ENCODE measurements at regions of chr3 and their contacts with region 1.

Region 1: DNA sequence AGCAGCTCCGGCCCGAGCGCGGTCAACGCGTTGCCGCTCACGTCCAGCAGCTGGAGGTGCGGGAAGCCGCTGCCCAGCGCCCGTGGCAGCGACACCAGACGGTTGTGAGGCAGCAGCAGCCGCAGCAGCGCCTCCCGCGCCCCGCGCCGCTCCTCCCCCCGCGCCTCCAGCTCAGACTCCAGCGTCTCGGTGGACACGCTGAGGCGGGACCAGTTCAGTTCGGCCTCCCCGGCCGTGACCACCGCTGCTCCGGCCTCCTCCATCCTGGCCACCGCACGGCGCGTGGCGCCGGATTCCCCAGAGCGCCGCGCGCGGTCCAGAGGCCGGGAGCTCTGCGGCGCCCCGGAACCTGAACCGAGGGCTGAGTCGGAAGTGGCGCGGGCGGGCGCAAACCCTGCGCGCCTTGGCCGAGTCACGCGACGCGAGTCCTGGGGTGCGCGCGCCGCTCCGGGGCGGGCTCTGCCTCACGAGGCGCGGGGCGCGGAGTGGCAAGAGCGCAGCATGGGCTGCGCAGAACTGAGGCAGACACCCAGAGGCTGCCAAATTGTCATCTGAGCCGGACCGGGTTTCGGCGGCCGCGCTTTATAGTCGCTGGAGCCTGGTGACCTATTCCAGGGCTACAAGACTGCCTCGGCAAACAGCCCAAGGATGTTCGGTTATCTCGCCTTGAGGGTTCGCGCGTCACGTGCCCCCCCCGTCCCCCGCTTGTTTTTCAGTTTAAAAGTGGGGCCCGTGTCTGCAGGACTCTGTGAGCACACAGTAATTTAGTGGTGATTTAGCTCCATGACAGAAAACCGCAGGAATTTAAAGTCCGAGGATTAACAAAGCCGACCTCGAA is at the start of gene LRRC58:
- DNase-seq: peak; percentile 94 to 98 (median 97)
- ATAC-seq: peak; percentile 99
- H3K4me3 ChIP-seq: peak within 1 kb of the TSS; percentile 79
- H3K27ac ChIP-seq: peak within 1 kb of the TSS; percentile 67
- H3K4me1 ChIP-seq: no peaks in the 10 kb centered on the region
- H3K27me3 ChIP-seq: no peaks in the 10 kb centered on the region
- total RNA-seq, gene LRRC58: 10.3 to 14.6 (median 12.4) TPM

Region 2: GRCh38 chr3:120410541-120410940 is 61.3 kb after region 1 on chr3:
- intact Hi-C with region 1: loop called in 1 of 4 experiments (anchors 5 kb)
- DNase-seq: no peak
- ATAC-seq: no peak
- H3K4me3 ChIP-seq: no peak overlapping the region
- H3K27ac ChIP-seq: no peak overlapping the region
- H3K4me1 ChIP-seq: peaks cover 8% of the 10 kb centered on the region
- H3K27me3 ChIP-seq: no peaks in the 10 kb centered on the region